ENCODE measurements at regions of chr9 and their contacts with region 1.

Region 1: GRCh38 chr9:15873569-15874177 is 320.8 kb downstream of the CCDC171 start:
- DNase-seq: no peak
- ATAC-seq: no peak
- H3K4me3 Mint-ChIP-seq: no peak overlapping the region
- H3K27ac Mint-ChIP-seq: no peak overlapping the region
- H3K4me1 Mint-ChIP-seq: no peaks in the 10 kb centered on the region
- H3K27me3 Mint-ChIP-seq: no peaks in the 10 kb centered on the region

Region 2: GRCh38 chr9:15422372-15423230 is 451.1 kb before region 1 on chr9 and contains the start of gene SNAPC3:
- CTCF ChIA-PET with region 1: no interaction called
- POLR2A ChIA-PET with region 1: no interaction called
- intact Hi-C with region 1: no loop called
- DNase-seq: peak; percentile 96
- ATAC-seq: peak; percentile 97
- H3K4me3 Mint-ChIP-seq: peak within 1 kb of the TSS; percentile 95
- H3K27ac Mint-ChIP-seq: peak within 1 kb of the TSS; percentile 92
- H3K4me1 Mint-ChIP-seq: peaks cover 32% of the 10 kb centered on the region
- H3K27me3 Mint-ChIP-seq: no peaks in the 10 kb centered on the region
- total RNA-seq, gene SNAPC3: 37.8 to 39.6 TPM

Region 3: GRCh38 chr9:15901572-15901971 is 27.9 kb after region 1 on chr9:
- CTCF ChIA-PET with region 1: no interaction called
- POLR2A ChIA-PET with region 1: no interaction called
- intact Hi-C with region 1: loop called in 1 of 2 experiments (anchors 2 kb)
- DNase-seq: no peak
- ATAC-seq: no peak
- H3K4me3 Mint-ChIP-seq: no peak overlapping the region
- H3K27ac Mint-ChIP-seq: no peak overlapping the region
- H3K4me1 Mint-ChIP-seq: no peaks in the 10 kb centered on the region
- H3K27me3 Mint-ChIP-seq: no peaks in the 10 kb centered on the region